ENCODE measurements at regions of chr1 and their contacts with region 1.

Region 1: DNA sequence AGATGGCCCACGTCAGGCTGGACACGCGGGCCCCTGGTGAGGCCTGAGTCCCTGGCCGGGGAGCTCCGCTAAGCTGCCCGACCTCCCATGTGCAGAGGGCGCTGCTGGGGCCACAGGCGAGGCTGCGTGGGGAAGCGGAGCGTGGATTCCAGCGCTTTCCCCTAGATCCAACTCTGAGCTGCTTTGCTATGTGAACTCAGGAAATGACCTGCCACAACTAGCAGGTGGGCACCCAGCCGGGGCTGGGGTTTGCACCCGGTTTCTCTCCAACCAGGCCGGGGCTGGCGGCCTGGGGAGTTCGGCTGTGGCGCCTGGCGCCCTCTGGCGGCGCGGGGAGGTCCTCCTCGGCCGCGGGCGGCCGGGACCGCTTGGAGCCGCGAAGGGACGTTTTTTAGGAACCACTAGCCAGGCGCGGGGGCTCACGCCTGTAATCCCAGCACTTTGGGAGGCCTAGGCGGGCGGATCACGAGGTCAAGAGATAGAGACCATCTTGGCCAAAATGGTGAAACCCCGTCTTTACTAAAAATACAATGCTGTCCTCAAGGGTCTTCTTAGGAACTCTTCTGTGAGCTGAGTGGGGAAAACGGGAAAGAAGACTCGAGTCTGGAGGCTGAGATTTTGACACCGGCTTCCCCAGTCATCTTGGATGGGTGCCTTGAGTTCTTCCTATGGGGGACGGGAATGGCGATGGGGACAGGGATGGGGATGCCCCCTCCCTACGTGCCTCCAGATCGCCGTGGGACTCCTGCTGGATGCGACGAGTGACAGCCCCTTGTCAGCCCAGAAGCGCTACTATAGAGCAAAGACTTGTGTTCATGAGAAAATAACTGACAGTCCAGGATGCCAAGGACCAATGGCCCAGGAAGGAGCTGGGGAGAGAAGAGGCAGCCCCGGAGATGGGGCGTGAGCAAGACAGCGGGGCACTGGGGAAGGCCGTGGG is 12.6 kb downstream of the PYCR2 start:
- DNase-seq: peak; percentile 46 to 74
- H3K4me3 ChIP-seq: no peak overlapping the region
- H3K27ac ChIP-seq: peak overlapping the region in 1 of 2 donors; percentile 4
- H3K4me1 ChIP-seq: no peaks in the 10 kb centered on the region
- H3K27me3 ChIP-seq: no peaks in the 10 kb centered on the region
- CTCF ChIP-seq: peak; percentile 82 to 93 (median 85)
- POLR2A ChIP-seq: no peak

Region 2: GRCh38 chr1:225866061-225866837 is 45.2 kb before region 1 on chr1:
- intact Hi-C with region 1: no loop called
- DNase-seq: no peak
- H3K4me3 ChIP-seq: no peak overlapping the region
- H3K27ac ChIP-seq: peak overlapping the region; percentile 79 to 87
- H3K4me1 ChIP-seq: no peaks in the 10 kb centered on the region
- H3K27me3 ChIP-seq: no peaks in the 10 kb centered on the region
- CTCF ChIP-seq: no peak
- POLR2A ChIP-seq: no peak

Region 3: GRCh38 chr1:225977937-225978748 is 66.7 kb after region 1 on chr1:
- intact Hi-C with region 1: loop called (anchors 10 kb)
- DNase-seq: no peak
- H3K4me3 ChIP-seq: no peak overlapping the region
- H3K27ac ChIP-seq: no peak overlapping the region
- H3K4me1 ChIP-seq: no peaks in the 10 kb centered on the region
- H3K27me3 ChIP-seq: no peaks in the 10 kb centered on the region
- CTCF ChIP-seq: no peak
- POLR2A ChIP-seq: no peak